PC-9 (cell line): ENCODE measurements at regions of chr17 and their contacts with region 1.

Region 1: GRCh38 chr17:7306911-7307686 is at the start of gene EIF5A:
- DNase-seq: peak; percentile 99
- H3K4me3 ChIP-seq: peak within 1 kb of the TSS; percentile 86
- H3K27ac ChIP-seq: peak within 1 kb of the TSS; percentile 96
- H3K4me1 ChIP-seq: peaks cover 26% of the 10 kb centered on the region
- H3K27me3 ChIP-seq: no peaks in the 10 kb centered on the region
- CTCF ChIP-seq: no peak
- total RNA-seq, gene EIF5A: 806 and 1,298 TPM in 2 replicates

Region 2: GRCh38 chr17:7035591-7036368 is 271.3 kb before region 1 on chr17 and contains the start of gene SLC16A13:
- CTCF ChIA-PET with region 1: no interaction called
- POLR2A ChIA-PET with region 1: interaction called, 36 read pairs
- intact Hi-C with region 1: no loop called
- DNase-seq: peak; percentile 93 to 99
- H3K4me3 ChIP-seq: peak within 1 kb of the TSS; percentile 76
- H3K27ac ChIP-seq: peak within 1 kb of the TSS; percentile 71
- H3K4me1 ChIP-seq: peaks cover 20% of the 10 kb centered on the region
- H3K27me3 ChIP-seq: no peaks in the 10 kb centered on the region
- CTCF ChIP-seq: no peak
- total RNA-seq, gene SLC16A13: 33.4 and 40.6 TPM in 2 replicates

Region 3: DNA sequence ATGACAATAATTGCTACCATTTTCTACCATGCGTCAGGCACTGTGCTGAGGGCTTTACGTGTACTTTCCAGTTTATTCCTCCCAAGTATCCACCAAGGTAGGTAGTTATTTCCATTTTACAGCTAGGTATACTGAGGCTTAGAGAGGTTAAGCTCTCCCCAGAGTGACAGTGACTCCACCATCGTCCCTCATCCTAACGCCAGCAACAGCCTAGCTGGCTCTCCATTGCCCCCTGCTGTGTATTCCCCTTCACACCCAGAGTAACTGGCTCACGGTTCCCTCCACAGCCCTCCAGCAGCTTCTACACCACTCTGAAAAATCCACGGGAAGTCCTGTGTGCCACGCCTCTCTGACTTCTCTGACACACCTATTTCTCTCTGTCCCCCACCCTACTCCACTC is 120.9 kb before region 1 on chr17:
- CTCF ChIA-PET with region 1: no interaction called
- POLR2A ChIA-PET with region 1: interaction called, 11 read pairs
- intact Hi-C with region 1: no loop called
- DNase-seq: no peak
- H3K4me3 ChIP-seq: no peak overlapping the region
- H3K27ac ChIP-seq: no peak overlapping the region
- H3K4me1 ChIP-seq: 0 out of 2 replicates have a peak, but pooled peaks cover 3% of the 10 kb centered on the region
- H3K27me3 ChIP-seq: no peaks in the 10 kb centered on the region
- CTCF ChIP-seq: no peak

Region 4: DNA sequence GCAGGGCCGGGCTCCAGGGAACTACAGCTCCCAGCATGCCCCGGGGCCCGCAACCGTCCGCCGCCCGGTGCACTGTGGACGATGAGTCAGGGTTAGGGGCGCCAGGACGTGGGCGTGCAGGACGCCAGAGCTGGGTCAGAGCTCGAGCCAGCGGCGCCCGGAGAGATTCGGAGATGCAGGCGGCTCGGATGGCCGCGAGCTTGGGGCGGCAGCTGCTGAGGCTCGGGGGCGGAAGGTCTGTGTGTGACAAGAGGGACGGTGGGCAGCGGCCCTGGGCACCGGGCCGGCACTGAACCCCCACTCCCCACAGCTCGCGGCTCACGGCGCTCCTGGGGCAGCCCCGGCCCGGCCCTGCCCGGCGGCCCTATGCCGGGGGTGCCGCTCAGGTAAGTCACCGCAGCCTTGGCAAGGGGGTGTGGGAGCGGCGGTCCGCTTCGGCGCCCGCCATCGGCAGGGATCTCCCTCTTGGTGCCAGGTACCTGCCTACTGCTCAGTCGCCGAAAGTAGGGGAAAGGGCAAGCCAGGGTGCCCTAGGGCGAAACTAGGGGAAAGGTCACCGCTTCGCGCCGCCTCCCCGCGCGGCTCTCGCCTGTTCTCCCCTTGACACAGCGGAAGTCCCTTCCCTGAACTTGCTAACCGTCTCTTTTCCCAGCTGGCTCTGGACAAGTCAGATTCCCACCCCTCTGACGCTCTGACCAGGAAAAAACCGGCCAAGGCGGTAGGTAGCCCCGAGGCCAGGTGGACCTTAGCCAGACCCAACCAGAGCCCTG is 87.1 kb before region 1 on chr17 and contains the starts of genes ACADVL and DLG4:
- CTCF ChIA-PET with region 1: no interaction called
- POLR2A ChIA-PET with region 1: no interaction called
- intact Hi-C with region 1: loop called (anchors 5 kb)
- DNase-seq: peak; percentile 95 to 98
- H3K4me3 ChIP-seq: peak within 1 kb of the TSS; percentile 77
- H3K27ac ChIP-seq: peak within 1 kb of the TSS; percentile 98
- H3K4me1 ChIP-seq: peaks cover 36% of the 10 kb centered on the region
- H3K27me3 ChIP-seq: no peaks in the 10 kb centered on the region
- CTCF ChIP-seq: no peak
- total RNA-seq, gene ACADVL: 531 and 604 TPM in 2 replicates
- total RNA-seq, gene DLG4: 27.1 and 32.8 TPM in 2 replicates

Region 5: GRCh38 chr17:7329374-7329996 is 22.4 kb after region 1 on chr17:
- CTCF ChIA-PET with region 1: no interaction called
- POLR2A ChIA-PET with region 1: interaction called, 3 read pairs
- intact Hi-C with region 1: loop called (anchors 2 kb)
- DNase-seq: peak; percentile 94 to 98
- H3K4me3 ChIP-seq: peak overlapping the region; percentile 100
- H3K27ac ChIP-seq: peak overlapping the region; percentile 67
- H3K4me1 ChIP-seq: peaks cover 16% of the 10 kb centered on the region
- H3K27me3 ChIP-seq: no peaks in the 10 kb centered on the region
- CTCF ChIP-seq: no peak

Region 6: DNA sequence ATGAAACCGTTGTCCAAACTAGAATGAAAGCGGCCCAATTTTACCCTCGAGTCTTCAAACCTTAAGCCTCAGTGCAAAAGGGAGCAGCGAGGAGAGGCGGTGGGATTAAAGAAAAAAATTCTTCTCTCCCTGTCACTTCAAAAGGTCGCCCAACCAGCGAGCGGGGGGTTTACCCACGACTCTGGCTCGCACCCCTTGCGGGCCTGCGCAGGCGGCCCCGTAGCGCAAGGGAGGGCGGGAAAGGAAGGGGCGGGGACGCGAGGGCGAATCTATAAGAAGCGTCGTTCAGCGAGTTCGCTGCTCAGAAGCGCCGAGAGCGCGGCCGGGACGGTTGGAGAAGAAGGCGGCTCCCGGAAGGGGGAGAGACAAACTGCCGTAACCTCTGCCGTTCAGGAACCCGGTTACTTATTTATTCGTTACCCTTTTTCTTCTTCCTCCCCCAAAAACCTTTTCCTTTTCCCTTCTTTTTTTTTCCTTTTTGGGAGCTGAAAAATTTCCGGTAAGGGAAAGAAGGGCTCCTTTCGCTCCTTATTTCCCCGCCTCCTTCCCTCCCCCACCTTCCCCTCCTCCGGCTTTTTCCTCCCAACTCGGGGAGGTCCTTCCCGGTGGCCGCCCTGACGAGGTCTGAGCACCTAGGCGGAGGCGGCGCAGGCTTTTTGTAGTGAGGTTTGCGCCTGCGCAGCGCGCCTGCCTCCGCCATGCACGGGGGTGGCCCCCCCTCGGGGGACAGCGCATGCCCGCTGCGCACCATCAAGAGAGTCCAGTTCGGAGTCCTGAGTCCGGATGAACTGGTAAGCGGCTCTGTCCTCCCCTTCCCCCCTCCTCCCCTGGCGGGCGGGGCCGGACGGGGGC is 177.2 kb after region 1 on chr17 and contains the start of gene POLR2A:
- CTCF ChIA-PET with region 1: no interaction called
- POLR2A ChIA-PET with region 1: no interaction called
- intact Hi-C with region 1: loop called (anchors 1 kb)
- DNase-seq: peak; percentile 79 to 99
- H3K4me3 ChIP-seq: peak within 1 kb of the TSS; percentile 88
- H3K27ac ChIP-seq: peak within 1 kb of the TSS; percentile 95
- H3K4me1 ChIP-seq: peaks cover 18% of the 10 kb centered on the region
- H3K27me3 ChIP-seq: no peaks in the 10 kb centered on the region
- CTCF ChIP-seq: no peak
- total RNA-seq, gene POLR2A: 149 and 166 TPM in 2 replicates